CD4-positive, alpha-beta T cell (primary cell): ENCODE measurements at regions of chr21 and their contacts with region 1.

Region 1: DNA sequence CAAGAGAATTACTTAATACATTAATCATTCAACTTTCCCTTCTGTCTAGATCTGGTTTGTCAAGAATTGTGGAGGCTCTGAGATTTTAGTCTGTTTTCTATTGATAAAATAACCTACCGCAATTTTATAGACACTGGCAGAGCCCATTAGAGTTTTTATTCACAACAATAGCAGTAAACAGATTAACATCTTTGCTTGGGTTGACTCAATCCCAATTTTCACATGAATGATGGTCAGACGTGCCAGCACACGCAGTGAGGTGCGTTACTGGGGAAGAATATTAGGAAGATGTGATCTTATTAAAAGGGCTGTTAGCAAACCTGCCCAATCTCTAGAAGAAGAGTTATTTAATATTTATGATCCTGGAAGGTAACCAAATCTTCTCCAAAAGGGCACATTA is 736.6 kb downstream of the MRPL39 start:
- DNase-seq: no peak
- ATAC-seq: no peak
- H3K4me3 ChIP-seq: no peak overlapping the region
- H3K4me3 Mint-ChIP-seq: no peak overlapping the region
- H3K27ac ChIP-seq: no peak overlapping the region
- H3K27ac Mint-ChIP-seq: no peak overlapping the region
- H3K4me1 ChIP-seq: no peaks in the 10 kb centered on the region
- H3K4me1 Mint-ChIP-seq: no peaks in the 10 kb centered on the region
- H3K27me3 ChIP-seq: no peaks in the 10 kb centered on the region
- H3K27me3 Mint-ChIP-seq: no peaks in the 10 kb centered on the region
- CTCF ChIP-seq: no peak

Region 2: GRCh38 chr21:24693779-24694178 is 176.9 kb before region 1 on chr21:
- CTCF ChIA-PET with region 1: no interaction called
- POLR2A ChIA-PET with region 1: no interaction called
- intact Hi-C with region 1: no loop called
- DNase-seq: no peak
- ATAC-seq: no peak
- H3K4me3 ChIP-seq: no peak overlapping the region
- H3K4me3 Mint-ChIP-seq: no peak overlapping the region
- H3K27ac ChIP-seq: no peak overlapping the region
- H3K27ac Mint-ChIP-seq: no peak overlapping the region
- H3K4me1 ChIP-seq: no peaks in the 10 kb centered on the region
- H3K4me1 Mint-ChIP-seq: no peaks in the 10 kb centered on the region
- H3K27me3 ChIP-seq: no peaks in the 10 kb centered on the region
- H3K27me3 Mint-ChIP-seq: no peaks in the 10 kb centered on the region
- CTCF ChIP-seq: no peak

Region 3: DNA sequence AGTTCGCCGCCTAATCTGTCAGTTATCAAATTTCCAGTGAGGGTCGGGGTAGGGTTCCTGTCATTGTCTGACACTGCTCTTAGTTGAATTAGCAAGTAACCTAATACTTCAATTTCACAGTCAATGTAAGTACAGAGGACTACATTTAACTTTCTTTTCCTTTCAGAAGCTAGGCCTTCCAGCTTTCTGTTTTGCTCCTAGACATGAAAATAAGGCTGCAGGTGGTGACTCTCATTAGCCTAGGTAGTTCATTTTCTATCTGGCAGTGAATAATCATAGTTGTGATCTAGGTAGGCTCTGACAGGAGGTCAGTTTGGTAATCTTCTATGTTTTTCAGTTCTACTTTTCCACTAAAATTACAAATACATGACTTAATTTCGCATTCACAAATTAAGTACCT is 46.4 kb before region 1 on chr21:
- CTCF ChIA-PET with region 1: no interaction called
- POLR2A ChIA-PET with region 1: no interaction called
- intact Hi-C with region 1: loop called in 1 of 2 experiments (anchors 10 kb)
- DNase-seq: no peak
- ATAC-seq: no peak
- H3K4me3 ChIP-seq: no peak overlapping the region
- H3K4me3 Mint-ChIP-seq: no peak overlapping the region
- H3K27ac ChIP-seq: no peak overlapping the region
- H3K27ac Mint-ChIP-seq: no peak overlapping the region
- H3K4me1 ChIP-seq: no peaks in the 10 kb centered on the region
- H3K4me1 Mint-ChIP-seq: no peaks in the 10 kb centered on the region
- H3K27me3 ChIP-seq: no peaks in the 10 kb centered on the region
- H3K27me3 Mint-ChIP-seq: no peaks in the 10 kb centered on the region
- CTCF ChIP-seq: no peak

Region 4: GRCh38 chr21:24941316-24942185 is 70.9 kb after region 1 on chr21:
- CTCF ChIA-PET with region 1: no interaction called
- POLR2A ChIA-PET with region 1: no interaction called
- intact Hi-C with region 1: no loop called
- DNase-seq: no peak
- ATAC-seq: no peak
- H3K4me3 ChIP-seq: no peak overlapping the region
- H3K4me3 Mint-ChIP-seq: no peak overlapping the region
- H3K27ac ChIP-seq: no peak overlapping the region
- H3K27ac Mint-ChIP-seq: no peak overlapping the region
- H3K4me1 ChIP-seq: no peaks in the 10 kb centered on the region
- H3K4me1 Mint-ChIP-seq: no peaks in the 10 kb centered on the region
- H3K27me3 ChIP-seq: no peaks in the 10 kb centered on the region
- H3K27me3 Mint-ChIP-seq: no peaks in the 10 kb centered on the region
- CTCF ChIP-seq: no peak